ENCODE measurements at regions of chr11 and their contacts with region 1.

Region 1: GRCh38 chr11:75388386-75389275 is 10.7 kb upstream of the RPS3 start:
- DNase-seq: peak; percentile 83
- ATAC-seq: peak; percentile 83
- H3K4me3 Mint-ChIP-seq: no peak overlapping the region
- H3K27ac Mint-ChIP-seq: no peak overlapping the region
- H3K4me1 Mint-ChIP-seq: peaks cover 12% of the 10 kb centered on the region
- H3K27me3 Mint-ChIP-seq: peaks cover 14% of the 10 kb centered on the region

Region 2: GRCh38 chr11:75328426-75329277 is 60.0 kb before region 1 on chr11:
- CTCF ChIA-PET with region 1: interaction called, 58 read pairs
- POLR2A ChIA-PET with region 1: interaction called, 7 read pairs
- DNase-seq: peak; percentile 87
- ATAC-seq: peak; percentile 89
- H3K4me3 Mint-ChIP-seq: peak overlapping the region; percentile 47
- H3K27ac Mint-ChIP-seq: peak overlapping the region; percentile 94
- H3K4me1 Mint-ChIP-seq: peaks cover 78% of the 10 kb centered on the region
- H3K27me3 Mint-ChIP-seq: no peaks in the 10 kb centered on the region

Region 3: GRCh38 chr11:75351791-75352587 is 36.6 kb before region 1 on chr11:
- CTCF ChIA-PET with region 1: interaction called, 49 read pairs
- POLR2A ChIA-PET with region 1: interaction called, 12 read pairs
- DNase-seq: peak; percentile 77
- ATAC-seq: peak; percentile 62
- H3K4me3 Mint-ChIP-seq: peak overlapping the region; percentile 87
- H3K27ac Mint-ChIP-seq: peak overlapping the region; percentile 94
- H3K4me1 Mint-ChIP-seq: peaks cover 60% of the 10 kb centered on the region
- H3K27me3 Mint-ChIP-seq: no peaks in the 10 kb centered on the region

Region 4: GRCh38 chr11:75399344-75400145 is 10.9 kb after region 1 on chr11 and contains the start of gene RPS3:
- CTCF ChIA-PET with region 1: interaction called, 21 read pairs
- POLR2A ChIA-PET with region 1: interaction called, 5 read pairs
- DNase-seq: peak; percentile 93
- ATAC-seq: peak; percentile 91
- H3K4me3 Mint-ChIP-seq: peak within 1 kb of the TSS; percentile 96
- H3K27ac Mint-ChIP-seq: peak within 1 kb of the TSS; percentile 98
- H3K4me1 Mint-ChIP-seq: peaks cover 46% of the 10 kb centered on the region
- H3K27me3 Mint-ChIP-seq: peaks cover 5% of the 10 kb centered on the region
- total RNA-seq, gene RPS3: 2,820 to 2,871 TPM

Region 5: DNA sequence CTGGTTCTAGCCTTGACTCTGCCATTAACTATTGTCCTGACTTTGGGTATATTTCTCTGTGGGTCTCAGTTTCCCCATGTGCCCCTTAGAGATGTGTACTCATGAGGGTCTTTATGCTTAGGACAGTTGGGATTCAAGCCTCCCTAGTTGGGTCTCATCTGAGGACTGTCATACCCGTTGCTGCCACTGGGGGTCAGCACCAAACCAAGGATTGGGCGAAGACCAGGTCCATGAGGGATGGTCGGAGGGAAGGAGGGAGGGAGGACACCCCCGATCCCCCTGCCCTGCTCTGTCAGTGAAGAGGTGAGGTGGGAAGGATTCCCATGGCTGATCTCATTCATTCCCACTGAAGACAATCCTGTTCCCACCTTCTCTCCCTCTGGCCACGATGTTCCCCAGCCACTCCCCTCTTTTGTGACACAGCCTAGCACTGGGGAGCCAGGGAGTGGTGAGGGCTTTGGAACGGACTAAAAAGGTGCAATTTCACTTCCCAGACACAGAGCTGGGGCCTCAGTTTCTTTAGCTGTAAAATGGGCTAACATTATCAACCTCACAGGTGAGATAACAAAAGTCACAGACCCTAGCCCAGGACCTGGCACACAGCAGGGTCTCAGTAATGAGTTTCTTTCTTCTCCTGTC is 56.8 kb after region 1 on chr11:
- CTCF ChIA-PET with region 1: interaction called, 16 read pairs
- POLR2A ChIA-PET with region 1: no interaction called
- DNase-seq: peak; percentile 78
- ATAC-seq: peak; percentile 80
- H3K4me3 Mint-ChIP-seq: no peak overlapping the region
- H3K27ac Mint-ChIP-seq: no peak overlapping the region
- H3K4me1 Mint-ChIP-seq: no peaks in the 10 kb centered on the region
- H3K27me3 Mint-ChIP-seq: no peaks in the 10 kb centered on the region

Region 6: GRCh38 chr11:75654314-75654713 is 265.7 kb after region 1 on chr11:
- CTCF ChIA-PET with region 1: no interaction called
- POLR2A ChIA-PET with region 1: no interaction called
- DNase-seq: no peak
- ATAC-seq: no peak
- H3K4me3 Mint-ChIP-seq: no peak overlapping the region
- H3K27ac Mint-ChIP-seq: no peak overlapping the region
- H3K4me1 Mint-ChIP-seq: peaks cover 10% of the 10 kb centered on the region
- H3K27me3 Mint-ChIP-seq: peaks cover 29% of the 10 kb centered on the region